ENCODE measurements at regions of chr22 and their contacts with region 1.

Region 1: GRCh38 chr22:21735200-21736076 is at the start of gene YPEL1:
- DNase-seq: peak; percentile 92 to 99 (median 96)
- H3K4me3 ChIP-seq: peak within 1 kb of the TSS; percentile 56 to 92 (median 77)
- H3K27ac ChIP-seq: peak within 1 kb of the TSS in 57 of 59 donors; percentile 18 to 91 (median 79)
- H3K27me3 ChIP-seq: no peaks in the 10 kb centered on the region
- CTCF ChIP-seq: peak in 12 of 56 donors; percentile 3 to 50 (median 20)
- total RNA-seq, gene YPEL1: 16.4 to 47.2 (median 29.4) TPM

Region 2: GRCh38 chr22:21690401-21690801 is 45.0 kb before region 1 on chr22:
- intact Hi-C with region 1: no loop called
- DNase-seq: no peak
- H3K4me3 ChIP-seq: no peak overlapping the region
- H3K27ac ChIP-seq: peak overlapping the region in 37 of 59 donors; percentile 2 to 65 (median 36)
- H3K27me3 ChIP-seq: no peaks in the 10 kb centered on the region
- CTCF ChIP-seq: no peak

Region 3: GRCh38 chr22:21712894-21713712 is 22.3 kb before region 1 on chr22:
- intact Hi-C with region 1: loop called in 1 of 2 experiments (anchors 1 kb)
- DNase-seq: peak; percentile 57 to 90 (median 79)
- H3K4me3 ChIP-seq: peak overlapping the region in 44 of 59 donors; percentile 2 to 51 (median 30)
- H3K27ac ChIP-seq: peak overlapping the region in 41 of 59 donors; percentile 7 to 70 (median 47)
- H3K27me3 ChIP-seq: no peaks in the 10 kb centered on the region
- CTCF ChIP-seq: peak; percentile 61 to 96 (median 86)

Region 4: GRCh38 chr22:21766691-21767462 is 31.4 kb after region 1 on chr22:
- intact Hi-C with region 1: no loop called
- DNase-seq: no peak
- H3K4me3 ChIP-seq: no peak overlapping the region
- H3K27ac ChIP-seq: peak overlapping the region in 11 of 59 donors; percentile 8 to 55 (median 26)
- H3K27me3 ChIP-seq: no peaks in the 10 kb centered on the region
- CTCF ChIP-seq: no peak

Region 5: GRCh38 chr22:21791635-21792625 is 56.5 kb after region 1 on chr22:
- intact Hi-C with region 1: loop called (anchors 5 kb)
- DNase-seq: no peak
- H3K4me3 ChIP-seq: no peak overlapping the region
- H3K27ac ChIP-seq: peak overlapping the region in 13 of 59 donors; percentile 0 to 44 (median 10)
- H3K27me3 ChIP-seq: no peaks in the 10 kb centered on the region
- CTCF ChIP-seq: no peak

Region 6: GRCh38 chr22:21952586-21953571 is 217.4 kb after region 1 on chr22 and contains the start of gene PPM1F:
- intact Hi-C with region 1: loop called in 1 of 2 experiments (anchors 5 kb)
- DNase-seq: peak; percentile 64 to 91 (median 78)
- H3K4me3 ChIP-seq: peak within 1 kb of the TSS; percentile 44 to 80 (median 68)
- H3K27ac ChIP-seq: peak within 1 kb of the TSS in 25 of 59 donors; percentile 14 to 88 (median 46)
- H3K27me3 ChIP-seq: no peaks in the 10 kb centered on the region
- CTCF ChIP-seq: peak; percentile 64 to 99 (median 88)
- total RNA-seq, gene PPM1F: 22.1 to 52.4 (median 37.5) TPM